ENCODE measurements at regions of chr3 and their contacts with region 1.

Region 1: GRCh38 chr3:179811321-179812095 is 158.7 kb downstream of the USP13 start:
- DNase-seq: peak; percentile 73
- H3K4me3 ChIP-seq: peak overlapping the region in 1 of 2 experiments; percentile 27; a peak in 1 of 4 replicates
- H3K27ac ChIP-seq: peak overlapping the region in 1 of 2 experiments; percentile 86; a peak in 2 of 4 replicates
- H3K4me1 ChIP-seq: no peaks in the 10 kb centered on the region
- H3K27me3 ChIP-seq: no peaks in the 10 kb centered on the region
- CTCF ChIP-seq: peak; percentile 73
- EP300 ChIP-seq: 0 out of 4 replicates have a peak, but pooled peaks of 1 of the 2 experiments have one; percentile 6
- RAD21 ChIP-seq: peak; percentile 91

Region 2: GRCh38 chr3:179768080-179768479 is 43.4 kb before region 1 on chr3:
- CTCF ChIA-PET with region 1: interaction called, 19 read pairs
- POLR2A ChIA-PET with region 1: no interaction called
- DNase-seq: peak; percentile 79
- H3K4me3 ChIP-seq: peak overlapping the region in 1 of 2 experiments; percentile 47; a peak in 1 of 4 replicates
- H3K27ac ChIP-seq: peak overlapping the region in 1 of 2 experiments; percentile 29; a peak in 2 of 4 replicates
- H3K4me1 ChIP-seq: peaks cover 20 to 46% of the 10 kb centered on the region in 2 experiments
- H3K27me3 ChIP-seq: no peaks in the 10 kb centered on the region
- CTCF ChIP-seq: peak; percentile 84
- EP300 ChIP-seq: peak; percentile 39 to 65; a peak in 2 of 4 replicates
- RAD21 ChIP-seq: peak; percentile 77

Region 3: GRCh38 chr3:179801263-179801662 is 10.2 kb before region 1 on chr3:
- CTCF ChIA-PET with region 1: interaction called, 31 read pairs
- POLR2A ChIA-PET with region 1: no interaction called
- DNase-seq: no peak
- H3K4me3 ChIP-seq: no peak overlapping the region
- H3K27ac ChIP-seq: peak overlapping the region in 1 of 2 experiments; percentile 39; a peak in 1 of 4 replicates
- H3K4me1 ChIP-seq: peaks cover 0 to 9% of the 10 kb centered on the region in 2 experiments; a peak in 2 of 4 replicates
- H3K27me3 ChIP-seq: no peaks in the 10 kb centered on the region
- CTCF ChIP-seq: no peak
- EP300 ChIP-seq: no peak
- RAD21 ChIP-seq: no peak